ENCODE measurements at regions of chr15 and their contacts with region 1.

Region 1: DNA sequence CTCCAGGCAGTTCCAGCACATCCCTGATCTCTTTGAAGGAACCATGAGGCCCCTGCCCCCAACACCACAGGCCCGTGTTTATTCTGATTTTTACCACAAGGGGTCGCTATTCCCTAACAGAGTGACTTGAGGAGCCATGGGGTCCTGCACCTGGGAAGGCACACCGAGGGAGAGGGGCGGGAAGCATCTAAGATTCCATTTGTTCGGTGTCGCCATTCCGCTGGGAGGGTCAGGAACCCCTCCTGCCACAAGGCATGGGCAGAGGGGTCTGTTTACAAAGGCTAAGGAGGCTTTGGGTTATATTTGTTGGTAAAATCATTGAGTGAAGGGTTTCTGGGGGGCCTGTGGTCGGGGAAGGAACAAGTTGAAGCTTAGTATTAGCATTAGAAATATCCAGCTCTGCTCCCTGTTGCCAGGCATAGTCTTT is 77.1 kb downstream of the WDR76 start:
- DNase-seq: no peak
- H3K4me3 ChIP-seq: no peak overlapping the region
- H3K27me3 ChIP-seq: no peaks in the 10 kb centered on the region
- CTCF ChIP-seq: peak; percentile 80

Region 2: DNA sequence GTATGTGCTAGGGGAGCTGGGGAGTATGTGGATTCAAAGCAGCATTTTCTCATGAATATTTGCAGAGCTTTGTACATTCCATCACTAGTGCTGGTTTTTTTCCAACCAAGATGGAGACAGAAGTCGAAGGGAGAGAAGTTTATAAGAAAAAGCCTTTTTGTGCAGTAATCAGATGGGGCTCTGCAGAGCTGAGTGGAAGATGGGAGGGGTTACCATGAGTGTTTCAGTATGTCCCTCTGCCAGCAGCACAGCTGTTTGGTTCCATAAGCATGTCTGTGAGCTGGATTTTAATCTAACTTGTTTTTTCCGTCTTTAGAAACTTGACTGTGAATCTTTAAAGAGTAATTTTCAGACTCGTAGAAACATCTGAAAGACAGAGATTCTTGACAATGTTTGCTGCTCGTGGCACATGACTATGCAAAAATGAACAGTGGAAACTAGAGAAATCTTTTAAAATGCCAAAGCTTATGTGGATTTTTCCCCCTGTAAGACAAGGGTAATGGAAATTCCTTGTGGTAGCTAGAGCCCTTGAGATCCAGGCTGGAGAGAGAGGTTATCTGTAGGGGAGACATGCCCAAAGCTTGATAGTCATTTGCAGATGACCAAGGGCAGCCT is 1308.1 kb before region 1 on chr15:
- CTCF ChIA-PET with region 1: no interaction called
- POLR2A ChIA-PET with region 1: no interaction called
- DNase-seq: no peak
- H3K4me3 ChIP-seq: no peak overlapping the region
- H3K27me3 ChIP-seq: no peaks in the 10 kb centered on the region
- CTCF ChIP-seq: no peak

Region 3: GRCh38 chr15:43886558-43886957 is 17.3 kb before region 1 on chr15:
- CTCF ChIA-PET with region 1: interaction called, 13 read pairs
- POLR2A ChIA-PET with region 1: no interaction called
- DNase-seq: no peak
- H3K4me3 ChIP-seq: no peak overlapping the region
- H3K27me3 ChIP-seq: no peaks in the 10 kb centered on the region
- CTCF ChIP-seq: no peak

Region 4: GRCh38 chr15:43966646-43967045 is 62.8 kb after region 1 on chr15:
- CTCF ChIA-PET with region 1: no interaction called
- POLR2A ChIA-PET with region 1: no interaction called
- DNase-seq: no peak
- H3K4me3 ChIP-seq: no peak overlapping the region
- H3K27me3 ChIP-seq: no peaks in the 10 kb centered on the region
- CTCF ChIP-seq: no peak

Region 5: DNA sequence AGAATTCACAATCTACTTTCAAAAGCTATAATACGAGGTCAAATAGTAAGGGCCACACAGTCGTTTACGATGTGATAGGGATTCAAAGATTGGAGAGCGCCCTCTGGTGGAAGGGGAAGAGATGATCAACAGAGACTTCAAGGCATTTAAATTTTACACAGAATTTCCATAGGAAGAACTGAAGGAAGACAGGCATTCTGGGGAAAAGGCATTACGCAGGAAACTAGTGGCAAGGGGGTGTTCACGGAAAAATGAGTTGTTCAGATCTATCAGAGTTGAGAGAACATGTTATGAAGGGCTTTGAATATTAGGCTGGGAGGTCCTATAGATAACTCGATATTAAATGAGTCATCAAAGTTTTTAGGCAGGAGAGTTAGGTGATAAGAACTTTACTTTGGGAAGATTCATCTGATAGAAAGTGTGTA is 162.5 kb after region 1 on chr15:
- CTCF ChIA-PET with region 1: interaction called, 88 read pairs
- POLR2A ChIA-PET with region 1: no interaction called
- DNase-seq: no peak
- H3K4me3 ChIP-seq: no peak overlapping the region
- H3K27me3 ChIP-seq: no peaks in the 10 kb centered on the region
- CTCF ChIP-seq: peak; percentile 77

Region 6: DNA sequence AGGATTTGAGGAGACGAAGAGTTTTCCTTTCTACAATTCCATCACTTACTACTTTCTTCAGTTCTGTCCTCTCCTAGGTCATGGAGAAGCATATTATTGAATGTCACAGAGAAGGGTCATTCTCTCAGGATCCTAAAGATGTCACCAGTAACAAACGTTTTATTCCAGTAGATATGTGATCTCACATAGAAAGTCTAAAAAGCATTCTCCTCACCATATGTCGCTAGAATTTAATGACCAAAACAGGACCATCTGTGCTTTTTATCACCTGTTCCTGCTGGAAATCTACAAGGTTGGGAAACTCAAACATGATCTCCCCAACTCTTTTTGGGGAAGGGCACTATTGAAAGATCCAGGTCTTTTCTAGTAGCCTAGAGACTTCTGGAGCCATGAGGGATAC is 315.2 kb after region 1 on chr15:
- CTCF ChIA-PET with region 1: interaction called, 52 read pairs
- POLR2A ChIA-PET with region 1: no interaction called
- DNase-seq: no peak
- H3K4me3 ChIP-seq: no peak overlapping the region
- H3K27me3 ChIP-seq: no peaks in the 10 kb centered on the region
- CTCF ChIP-seq: no peak